ENCODE measurements at regions of chr22 and their contacts with region 1.

Region 1: DNA sequence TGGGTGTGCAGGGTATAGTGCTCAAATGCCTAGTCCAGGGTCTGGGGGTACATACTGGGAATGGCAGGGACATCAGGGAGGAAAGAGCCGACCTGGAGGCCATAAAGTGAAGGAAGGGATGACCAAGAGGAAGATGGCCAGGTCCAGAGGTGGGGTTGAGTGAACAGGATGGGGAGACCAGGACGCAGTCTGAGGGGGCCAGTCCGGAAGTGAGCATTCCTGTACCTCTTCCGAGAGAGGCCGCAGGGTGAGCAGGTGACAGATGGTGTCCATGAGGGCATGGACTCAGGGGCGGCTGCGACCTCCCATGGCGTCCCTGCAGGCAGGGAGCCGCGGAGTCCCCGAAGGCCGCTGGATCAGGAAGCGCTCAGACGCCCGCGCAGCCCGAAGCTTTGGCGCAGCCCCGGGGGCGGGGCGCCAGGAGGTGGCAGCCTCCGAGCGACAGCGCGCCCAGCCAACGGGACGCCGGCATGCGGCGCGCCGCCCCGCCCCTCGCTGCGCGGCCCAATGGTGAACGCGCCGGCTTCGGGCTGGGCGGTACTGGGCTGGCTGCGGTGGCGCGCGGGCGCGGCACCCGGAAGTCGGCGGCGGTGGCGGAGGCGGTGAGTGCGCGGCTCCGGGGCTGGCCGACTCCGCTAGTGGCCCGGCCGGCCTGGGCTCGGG is at the start of gene TANGO2:
- DNase-seq: peak; percentile 95
- H3K4me3 ChIP-seq: peak within 1 kb of the TSS; percentile 80 to 92 (median 86)
- H3K27ac ChIP-seq: peak within 1 kb of the TSS; percentile 81 to 93 (median 89)
- H3K4me1 ChIP-seq: peaks cover 19 to 37% (median 31%) of the 10 kb centered on the region in 4 donors
- H3K27me3 ChIP-seq: peaks cover 15% of the 10 kb centered on the region
- CTCF ChIP-seq: no peak
- EP300 ChIP-seq: no peak
- POLR2A ChIP-seq: peak; percentile 75
- total RNA-seq, gene TANGO2: 32.9 to 101 (median 50.6) TPM

Region 2: GRCh38 chr22:19943082-19944026 is 77.3 kb before region 1 on chr22:
- in situ Hi-C with region 1: no loop called
- intact Hi-C with region 1: no loop called
- DNase-seq: no peak
- H3K4me3 ChIP-seq: peak overlapping the region in 2 of 4 donors; percentile 61 to 95
- H3K27ac ChIP-seq: peak overlapping the region; percentile 87 to 91 (median 89)
- H3K4me1 ChIP-seq: peaks cover 23 to 48% (median 36%) of the 10 kb centered on the region in 4 donors
- H3K27me3 ChIP-seq: no peaks in the 10 kb centered on the region
- CTCF ChIP-seq: peak in 1 of 5 experiments; percentile 7
- EP300 ChIP-seq: no peak
- POLR2A ChIP-seq: peak; percentile 29

Region 3: DNA sequence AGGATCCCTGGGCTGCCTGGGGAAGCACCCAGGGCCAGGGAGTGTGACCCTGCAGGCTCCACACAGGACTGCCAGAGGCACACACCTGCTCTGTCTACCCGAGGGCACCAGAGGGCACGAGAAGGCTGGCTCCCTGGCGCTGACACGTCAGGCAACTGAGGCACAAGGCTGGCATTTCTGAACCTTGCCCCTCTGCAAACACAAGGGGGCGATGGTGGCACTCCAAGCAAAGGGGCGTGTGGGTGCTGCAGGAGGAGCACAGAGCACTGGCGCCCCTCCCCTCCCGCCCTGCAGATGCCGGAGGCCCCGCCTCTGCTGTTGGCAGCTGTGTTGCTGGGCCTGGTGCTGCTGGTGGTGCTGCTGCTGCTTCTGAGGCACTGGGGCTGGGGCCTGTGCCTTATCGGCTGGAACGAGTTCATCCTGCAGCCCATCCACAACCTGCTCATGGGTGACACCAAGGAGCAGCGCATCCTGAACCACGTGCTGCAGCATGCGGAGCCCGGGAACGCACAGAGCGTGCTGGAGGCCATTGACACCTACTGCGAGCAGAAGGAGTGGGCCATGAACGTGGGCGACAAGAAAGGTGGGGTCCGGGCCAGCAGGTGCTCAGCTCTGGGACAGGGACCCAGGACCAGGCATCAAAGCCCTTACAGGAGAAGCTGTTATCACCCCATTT is 58.3 kb before region 1 on chr22:
- in situ Hi-C with region 1: loop called in 1 of 4 experiments (anchors 10 kb)
- intact Hi-C with region 1: no loop called
- DNase-seq: peak; percentile 88
- H3K4me3 ChIP-seq: peak overlapping the region in 3 of 4 donors; percentile 9 to 43 (median 28)
- H3K27ac ChIP-seq: peak overlapping the region; percentile 86 to 89 (median 86)
- H3K4me1 ChIP-seq: peaks cover 15 to 36% (median 33%) of the 10 kb centered on the region in 4 donors
- H3K27me3 ChIP-seq: no peaks in the 10 kb centered on the region
- CTCF ChIP-seq: peak; percentile 49 to 83 (median 64)
- EP300 ChIP-seq: no peak
- POLR2A ChIP-seq: peak; percentile 4